Caco-2 (cell line): ENCODE measurements at regions of chr2 and their contacts with region 1.

Region 1: GRCh38 chr2:42424033-42424432 is 63.0 kb upstream of the COX7A2L start:
- DNase-seq: no peak
- H3K4me3 ChIP-seq: no peak overlapping the region
- H3K4me3 Mint-ChIP-seq: no peak overlapping the region
- H3K27ac Mint-ChIP-seq: no peak overlapping the region
- H3K4me1 ChIP-seq: peaks cover 4% of the 10 kb centered on the region; the same call in 1 of the 2 replicates
- H3K4me1 Mint-ChIP-seq: no peaks in the 10 kb centered on the region
- H3K27me3 ChIP-seq: no peaks in the 10 kb centered on the region
- H3K27me3 Mint-ChIP-seq: peaks cover 13% of the 10 kb centered on the region
- CTCF ChIP-seq: no peak

Region 2: GRCh38 chr2:42404676-42405075 is 19.4 kb before region 1 on chr2:
- CTCF ChIA-PET with region 1: no interaction called
- POLR2A ChIA-PET with region 1: no interaction called
- intact Hi-C with region 1: no loop called
- DNase-seq: no peak
- H3K4me3 ChIP-seq: no peak overlapping the region
- H3K4me3 Mint-ChIP-seq: no peak overlapping the region
- H3K27ac Mint-ChIP-seq: no peak overlapping the region
- H3K4me1 ChIP-seq: no peaks in the 10 kb centered on the region
- H3K4me1 Mint-ChIP-seq: no peaks in the 10 kb centered on the region
- H3K27me3 ChIP-seq: no peaks in the 10 kb centered on the region
- H3K27me3 Mint-ChIP-seq: no peaks in the 10 kb centered on the region
- CTCF ChIP-seq: no peak

Region 3: DNA sequence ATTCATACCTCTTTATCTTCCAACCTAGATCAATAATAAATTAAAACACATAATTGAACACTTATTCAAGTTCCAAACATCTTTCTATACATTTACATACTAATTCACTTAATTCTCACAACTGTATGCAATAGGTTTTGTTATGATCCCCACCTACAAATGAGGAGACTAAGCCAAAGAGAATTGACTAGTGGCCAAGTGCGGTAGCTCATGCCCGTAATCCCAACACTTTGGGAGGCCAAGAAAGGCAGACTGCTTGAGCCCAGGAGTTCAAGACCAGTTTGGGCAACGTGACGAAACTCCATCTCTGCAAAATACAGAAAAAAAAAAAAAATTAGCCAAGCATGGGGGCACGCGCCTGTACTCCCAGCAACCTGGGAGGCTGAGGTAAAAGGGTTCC is 33.0 kb after region 1 on chr2:
- CTCF ChIA-PET with region 1: no interaction called
- POLR2A ChIA-PET with region 1: interaction called, 18 read pairs
- intact Hi-C with region 1: no loop called
- DNase-seq: no peak
- H3K4me3 ChIP-seq: no peak overlapping the region
- H3K4me3 Mint-ChIP-seq: no peak overlapping the region
- H3K27ac Mint-ChIP-seq: no peak overlapping the region
- H3K4me1 ChIP-seq: no peaks in the 10 kb centered on the region
- H3K4me1 Mint-ChIP-seq: no peaks in the 10 kb centered on the region
- H3K27me3 ChIP-seq: no peaks in the 10 kb centered on the region; the same call in 1 of the 2 replicates
- H3K27me3 Mint-ChIP-seq: no peaks in the 10 kb centered on the region
- CTCF ChIP-seq: peak in 1 of 2 experiments; percentile 9

Region 4: DNA sequence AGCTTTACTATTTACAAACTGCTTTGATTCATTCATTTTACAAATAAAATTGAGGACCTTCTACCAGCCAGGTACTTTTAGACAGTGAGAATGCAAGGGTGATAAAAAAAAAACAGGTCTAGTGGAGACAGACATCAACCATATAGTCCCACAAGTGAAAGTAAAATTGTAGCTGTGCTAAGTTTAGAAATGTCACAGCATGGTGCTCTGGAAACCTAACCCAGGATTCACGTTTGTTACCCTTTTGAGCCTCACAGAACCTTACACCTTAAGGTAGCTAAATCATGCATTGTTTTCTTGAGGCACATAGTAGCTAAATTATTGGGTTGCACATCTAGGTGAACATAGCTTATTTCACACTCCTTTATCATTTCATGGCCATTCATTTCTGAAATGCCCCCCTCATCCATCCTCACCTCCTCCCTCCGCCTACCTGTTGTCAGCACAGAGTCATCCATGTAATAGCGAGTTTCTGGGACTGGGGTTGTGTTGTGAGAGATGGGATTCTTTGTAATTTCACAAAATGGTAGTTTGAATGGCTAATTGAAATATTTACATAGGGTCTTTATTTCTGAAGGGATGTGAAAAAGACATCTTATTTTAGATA is 151.5 kb after region 1 on chr2:
- CTCF ChIA-PET with region 1: no interaction called
- POLR2A ChIA-PET with region 1: no interaction called
- intact Hi-C with region 1: no loop called
- DNase-seq: no peak
- H3K4me3 ChIP-seq: no peak overlapping the region
- H3K4me3 Mint-ChIP-seq: no peak overlapping the region
- H3K27ac Mint-ChIP-seq: no peak overlapping the region
- H3K4me1 ChIP-seq: no peaks in the 10 kb centered on the region
- H3K4me1 Mint-ChIP-seq: no peaks in the 10 kb centered on the region
- H3K27me3 ChIP-seq: no peaks in the 10 kb centered on the region
- H3K27me3 Mint-ChIP-seq: no peaks in the 10 kb centered on the region
- CTCF ChIP-seq: no peak